ENCODE measurements at regions of chr2 and their contacts with region 1.

Region 1: GRCh38 chr2:230924470-230925341 is at the start of gene GPR55:
- DNase-seq: peak in 5 of 10 donors; percentile 19 to 65 (median 50)
- ATAC-seq: peak; percentile 83 to 89
- H3K4me3 Mint-ChIP-seq: peak within 1 kb of the TSS; percentile 83 to 93 (median 90)
- H3K27ac Mint-ChIP-seq: peak within 1 kb of the TSS; percentile 92 to 98 (median 94)
- H3K4me1 Mint-ChIP-seq: peaks cover 21 to 60% (median 55%) of the 10 kb centered on the region in 4 donors
- H3K27me3 Mint-ChIP-seq: no peaks in the 10 kb centered on the region
- polyA plus RNA-seq, gene GPR55: 1.1 to 3.2 (median 3.1) TPM

Region 2: DNA sequence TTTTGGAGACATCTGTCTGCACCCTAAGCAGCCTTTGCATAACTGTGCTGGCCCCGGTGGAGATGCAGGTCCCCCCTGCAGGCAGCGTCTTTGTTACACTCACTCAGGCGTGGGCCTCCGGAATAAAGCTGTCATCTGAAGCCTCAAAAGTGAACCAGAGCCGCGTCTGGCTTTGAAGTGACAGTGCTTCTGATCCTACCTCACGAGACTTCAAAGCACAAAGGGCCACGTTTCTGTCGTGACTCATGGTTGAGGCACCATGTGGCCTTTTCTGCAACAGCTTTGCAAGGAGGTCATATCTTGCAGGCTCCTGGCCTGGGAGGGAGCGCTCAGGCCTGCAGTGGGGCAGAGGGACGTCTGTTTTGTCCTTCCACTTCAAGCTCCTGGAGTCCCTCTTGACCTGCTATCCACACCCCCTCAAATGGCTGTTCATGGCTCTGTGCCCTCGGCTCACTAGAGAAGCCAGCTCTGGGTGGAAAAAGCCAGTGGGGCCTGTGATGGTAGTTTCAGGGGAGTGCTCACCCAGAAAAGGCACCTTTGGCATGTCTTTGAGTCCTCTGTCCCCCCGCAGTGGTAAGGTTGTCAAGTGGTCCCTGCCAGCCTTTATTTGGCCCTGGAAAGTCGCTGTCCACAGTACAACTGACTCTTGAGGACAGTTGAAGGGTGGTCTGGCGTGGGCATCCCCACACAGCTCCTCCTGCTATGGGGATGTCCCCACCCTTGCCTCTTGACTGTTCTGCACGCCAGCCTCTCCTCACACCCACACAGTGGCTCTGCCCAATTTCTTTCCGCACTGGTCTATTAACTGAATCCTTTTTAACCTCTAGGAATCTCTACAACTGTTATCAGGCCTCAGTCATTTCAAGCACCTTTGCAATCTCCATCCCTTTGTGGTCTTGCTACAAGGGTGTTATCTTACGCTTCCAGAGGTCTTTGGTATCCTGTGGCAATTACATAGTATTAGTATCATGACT is 19.0 kb before region 1 on chr2:
- POLR2A ChIA-PET with region 1: interaction called, 13 read pairs
- DNase-seq: peak; percentile 63 to 93 (median 86)
- ATAC-seq: peak; percentile 95 to 98
- H3K4me3 Mint-ChIP-seq: peak overlapping the region; percentile 5 to 70 (median 55)
- H3K27ac Mint-ChIP-seq: peak overlapping the region; percentile 37 to 93 (median 82)
- H3K4me1 Mint-ChIP-seq: peaks cover 32 to 65% (median 56%) of the 10 kb centered on the region in 4 donors
- H3K27me3 Mint-ChIP-seq: peaks cover 0 to 3% (median 0%) of the 10 kb centered on the region in 5 donors

Measured in naive thymus-derived CD8-positive, alpha-beta T cell (primary cell).